Lower leg skin (tissue), 4 donors: ENCODE measurements at regions of chr14 and their contacts with region 1.

Region 1: DNA sequence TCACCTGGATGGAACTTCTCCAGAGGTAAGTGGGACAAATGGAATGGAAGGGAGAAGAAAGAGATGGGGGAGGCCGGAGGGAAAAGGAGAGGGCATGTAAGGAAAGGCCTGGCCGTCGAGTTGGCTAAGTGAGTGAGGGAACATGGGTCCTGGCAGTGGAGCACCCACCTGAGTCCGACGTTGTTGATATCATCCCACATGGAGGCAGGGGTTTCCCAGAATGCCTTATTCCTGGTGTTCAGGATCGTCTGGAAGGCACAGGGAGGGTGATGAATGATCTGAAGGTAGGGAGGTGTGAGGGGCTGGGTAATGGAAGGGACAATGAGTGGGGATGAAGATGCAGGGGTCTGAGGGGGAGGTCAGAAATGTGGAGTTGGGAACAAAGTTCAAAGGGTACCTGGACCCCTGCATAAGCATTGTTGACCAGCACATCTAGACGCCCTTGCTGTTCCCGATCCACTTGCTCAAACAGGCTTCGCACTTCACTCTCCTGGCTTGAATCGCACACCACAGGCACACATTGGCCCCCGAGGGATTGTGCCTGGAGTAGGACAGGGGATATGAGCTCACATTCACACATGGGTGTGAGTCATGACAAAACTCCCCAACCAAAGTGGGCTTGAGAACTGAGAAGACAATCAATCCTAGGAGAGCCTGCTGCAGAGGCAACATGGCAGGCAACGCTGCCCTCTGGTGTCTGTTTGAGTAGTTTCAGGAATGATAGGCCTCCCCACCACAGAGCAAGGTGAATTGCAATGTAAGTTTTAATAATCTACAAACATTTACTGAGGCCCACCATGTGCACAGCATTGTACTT is 3.0 kb downstream of the DHRS1 start:
- DNase-seq: no peak
- H3K4me3 ChIP-seq: no peak overlapping the region
- CTCF ChIP-seq: no peak
- POLR2A ChIP-seq: no peak

Region 2: DNA sequence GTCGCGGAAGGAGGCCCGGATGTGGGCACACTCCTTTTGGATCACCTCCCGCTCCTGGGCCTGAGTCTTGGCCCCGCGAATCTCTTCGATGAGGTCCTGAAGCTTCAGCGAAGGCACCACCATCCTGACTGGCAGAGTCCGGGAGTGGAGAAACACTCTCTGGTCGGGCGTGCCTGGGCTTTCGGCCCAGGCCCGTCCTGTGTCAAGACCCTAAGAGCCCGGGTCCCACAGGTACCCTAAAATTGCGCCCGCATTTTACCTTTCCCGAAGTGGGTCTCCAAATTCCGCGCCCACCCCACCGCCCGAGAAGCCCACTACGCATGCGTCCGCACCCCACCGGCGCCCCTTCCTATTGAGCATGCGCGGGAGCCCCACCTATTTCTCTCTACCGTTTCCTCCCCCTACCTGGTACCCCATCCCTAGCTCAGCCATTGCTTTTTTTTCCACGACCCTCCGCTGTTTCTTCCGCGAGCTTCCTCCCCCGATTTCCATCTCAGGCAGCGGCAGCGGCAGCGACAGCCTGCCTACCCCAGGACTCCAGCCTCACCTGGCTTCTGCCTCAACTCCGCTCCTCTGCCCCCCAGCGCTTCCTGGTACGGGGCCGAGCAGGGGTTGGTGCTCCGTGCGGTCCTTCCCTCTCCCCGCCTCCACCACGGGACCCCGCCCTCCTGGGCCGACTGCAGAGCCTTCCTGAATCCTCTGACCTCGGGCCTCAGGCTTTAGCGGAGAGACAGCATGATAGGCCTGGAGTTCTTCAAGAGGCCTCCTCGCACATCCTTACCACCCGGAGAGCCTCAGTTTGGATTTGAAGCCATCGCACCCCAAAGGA is 729.1 kb before region 1 on chr14 and contains the start of gene AP1G2:
- intact Hi-C with region 1: no loop called
- DNase-seq: peak; percentile 90 to 97
- H3K4me3 ChIP-seq: peak within 1 kb of the TSS; percentile 46
- CTCF ChIP-seq: peak in 1 of 3 donors; percentile 31
- POLR2A ChIP-seq: peak in 1 of 2 donors; percentile 10
- total RNA-seq, gene AP1G2: 113 to 206 (median 141) TPM

Region 3: DNA sequence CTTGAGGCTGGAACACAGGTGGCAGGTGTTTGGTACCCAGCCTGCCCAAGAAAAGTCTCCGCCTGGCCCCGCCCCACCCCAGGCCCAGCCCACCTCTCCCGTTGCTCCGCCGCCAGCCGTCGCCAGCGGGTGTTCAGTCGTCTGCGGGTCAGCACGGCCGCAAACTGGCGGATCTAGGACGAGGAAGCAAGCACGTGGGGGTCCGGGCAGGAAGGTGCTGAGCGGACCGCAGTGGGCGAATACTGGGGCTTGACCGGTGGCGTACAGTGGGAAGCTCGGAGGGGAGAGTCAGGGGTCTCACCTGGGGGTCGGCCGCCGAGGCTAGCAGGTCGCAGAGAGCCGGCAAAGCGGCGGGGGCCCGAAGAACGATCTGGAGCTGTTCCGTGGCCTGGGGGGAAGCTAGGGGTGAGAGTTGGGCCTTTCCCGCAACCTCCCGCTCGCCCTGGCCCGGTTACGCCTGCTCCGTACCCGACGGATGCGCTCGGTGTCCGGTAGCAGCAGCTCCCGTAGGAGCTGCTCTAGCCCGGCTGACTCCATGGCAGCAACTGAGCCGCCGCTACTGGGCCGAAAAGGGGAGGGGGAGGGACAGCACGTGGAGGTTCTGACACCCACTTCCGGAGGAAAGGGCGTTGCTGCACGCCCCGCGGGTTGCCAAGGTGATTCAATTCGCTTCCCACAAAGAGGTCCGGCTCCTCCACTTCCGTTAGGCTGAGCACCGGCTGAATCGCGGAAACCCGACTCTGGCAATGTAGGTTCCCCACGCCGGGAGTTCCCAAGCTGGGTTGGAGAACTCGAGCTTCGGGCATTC is 108.1 kb before region 1 on chr14 and contains the start of gene IPO4:
- intact Hi-C with region 1: no loop called
- DNase-seq: peak; percentile 96 to 99
- H3K4me3 ChIP-seq: peak within 1 kb of the TSS; percentile 46
- CTCF ChIP-seq: peak in 1 of 3 donors; percentile 40
- POLR2A ChIP-seq: no peak
- total RNA-seq, gene IPO4: 25.1 to 40.0 (median 32.6) TPM

Region 4: GRCh38 chr14:24241829-24242443 is 54.6 kb before region 1 on chr14:
- intact Hi-C with region 1: loop called (anchors 2 kb)
- DNase-seq: peak in 1 of 2 donors; percentile 97
- H3K4me3 ChIP-seq: peak overlapping the region; percentile 56
- CTCF ChIP-seq: no peak
- POLR2A ChIP-seq: no peak